ENCODE measurements at regions of chr2 and their contacts with region 1.

Region 1: DNA sequence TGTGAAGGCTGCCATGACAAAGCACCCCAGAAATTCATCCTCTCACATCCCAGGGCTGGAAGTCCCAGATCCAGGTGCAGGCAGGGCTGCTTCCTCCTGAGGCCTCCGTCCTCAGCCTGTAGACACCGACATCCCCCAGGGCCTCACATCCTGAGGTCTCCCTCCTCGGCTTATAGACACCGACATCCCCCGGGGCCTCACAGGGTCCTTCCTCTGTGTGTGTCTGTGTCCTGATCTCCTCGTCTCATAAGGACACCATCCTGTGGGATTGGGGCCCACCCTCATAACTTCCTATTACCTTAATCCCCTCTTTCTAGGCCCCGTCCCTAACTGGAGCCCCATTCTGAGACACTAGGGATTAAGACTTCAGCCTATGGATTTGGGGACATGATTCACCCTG is 92.0 kb upstream of the SNTG2 start:
- DNase-seq: no peak
- ATAC-seq: no peak

Region 2: DNA sequence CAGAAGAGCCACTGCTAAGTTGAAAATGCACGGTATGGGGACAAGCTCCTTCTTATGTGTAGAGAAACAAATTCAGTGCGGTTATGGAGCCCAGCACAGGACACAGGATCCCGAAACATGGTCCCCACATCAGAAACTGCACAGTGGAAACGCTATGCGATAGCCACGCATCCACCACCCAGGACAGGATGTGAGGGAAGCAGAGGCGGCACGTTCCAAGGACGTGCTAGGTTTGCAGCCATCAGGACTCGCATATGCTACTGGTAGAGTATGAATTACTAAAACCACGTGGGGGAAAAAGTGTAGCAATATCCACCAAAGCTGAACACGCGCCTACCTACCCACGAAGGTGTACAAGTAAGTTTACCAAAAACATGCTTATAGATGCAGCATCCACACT is 57.3 kb after region 1 on chr2:
- intact Hi-C with region 1: loop called (anchors 2 kb)
- DNase-seq: no peak
- ATAC-seq: no peak

Measured in sciatic nerve (tissue), 2 donors.